GM12878 (cell line): ENCODE measurements at regions of chr12 and their contacts with region 1.

Region 1: GRCh38 chr12:97837401-97837800 is 374.8 kb downstream of the RMST start:
- DNase-seq: no peak
- ATAC-seq: no peak
- H3K4me3 ChIP-seq: no peak overlapping the region
- H3K27ac ChIP-seq: no peak overlapping the region
- H3K4me1 ChIP-seq: no peaks in the 10 kb centered on the region
- H3K27me3 ChIP-seq: no peaks in the 10 kb centered on the region
- CTCF ChIP-seq: no peak
- EP300 ChIP-seq: no peak
- POLR2A ChIP-seq: no peak
- RAD21 ChIP-seq: no peak

Region 2: DNA sequence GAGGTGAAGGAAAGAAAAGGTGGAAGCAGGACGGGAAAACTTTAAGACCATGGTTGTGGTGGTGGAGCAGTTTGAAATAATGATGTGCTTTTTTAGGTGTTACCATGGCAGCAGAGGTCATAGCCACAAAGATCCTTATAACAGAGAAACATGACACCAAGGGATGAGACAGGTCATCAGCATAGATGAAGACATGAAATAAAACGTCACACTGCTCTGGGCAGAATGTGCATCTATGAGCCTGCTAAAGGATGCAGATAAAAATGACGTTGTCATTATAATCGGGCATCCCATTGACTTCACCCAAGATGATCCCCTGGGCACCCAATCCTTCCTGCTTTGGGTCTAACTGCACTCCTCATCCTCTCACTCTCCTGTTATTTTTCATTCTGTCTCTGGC is 43.0 kb before region 1 on chr12:
- CTCF ChIA-PET with region 1: no interaction called
- POLR2A ChIA-PET with region 1: no interaction called
- RAD21 ChIA-PET with region 1: no interaction called
- SMC1A ChIA-PET with region 1: no interaction called
- in situ Hi-C with region 1: no loop called
- intact Hi-C with region 1: no loop called
- DNase-seq: no peak
- ATAC-seq: no peak
- H3K4me3 ChIP-seq: no peak overlapping the region
- H3K27ac ChIP-seq: no peak overlapping the region
- H3K4me1 ChIP-seq: no peaks in the 10 kb centered on the region
- H3K27me3 ChIP-seq: no peaks in the 10 kb centered on the region
- CTCF ChIP-seq: no peak
- EP300 ChIP-seq: no peak
- POLR2A ChIP-seq: no peak
- RAD21 ChIP-seq: no peak

Region 3: GRCh38 chr12:97921979-97922722 is 84.8 kb after region 1 on chr12:
- CTCF ChIA-PET with region 1: interaction called, 4 read pairs
- POLR2A ChIA-PET with region 1: no interaction called
- RAD21 ChIA-PET with region 1: no interaction called
- SMC1A ChIA-PET with region 1: no interaction called
- in situ Hi-C with region 1: no loop called
- intact Hi-C with region 1: loop called (anchors 5 kb)
- DNase-seq: no peak
- ATAC-seq: no peak
- H3K4me3 ChIP-seq: no peak overlapping the region
- H3K27ac ChIP-seq: no peak overlapping the region
- H3K4me1 ChIP-seq: no peaks in the 10 kb centered on the region
- H3K27me3 ChIP-seq: no peaks in the 10 kb centered on the region
- CTCF ChIP-seq: no peak
- EP300 ChIP-seq: no peak
- POLR2A ChIP-seq: no peak
- RAD21 ChIP-seq: no peak